ENCODE measurements at regions of chr10 and their contacts with region 1.

Region 1: DNA sequence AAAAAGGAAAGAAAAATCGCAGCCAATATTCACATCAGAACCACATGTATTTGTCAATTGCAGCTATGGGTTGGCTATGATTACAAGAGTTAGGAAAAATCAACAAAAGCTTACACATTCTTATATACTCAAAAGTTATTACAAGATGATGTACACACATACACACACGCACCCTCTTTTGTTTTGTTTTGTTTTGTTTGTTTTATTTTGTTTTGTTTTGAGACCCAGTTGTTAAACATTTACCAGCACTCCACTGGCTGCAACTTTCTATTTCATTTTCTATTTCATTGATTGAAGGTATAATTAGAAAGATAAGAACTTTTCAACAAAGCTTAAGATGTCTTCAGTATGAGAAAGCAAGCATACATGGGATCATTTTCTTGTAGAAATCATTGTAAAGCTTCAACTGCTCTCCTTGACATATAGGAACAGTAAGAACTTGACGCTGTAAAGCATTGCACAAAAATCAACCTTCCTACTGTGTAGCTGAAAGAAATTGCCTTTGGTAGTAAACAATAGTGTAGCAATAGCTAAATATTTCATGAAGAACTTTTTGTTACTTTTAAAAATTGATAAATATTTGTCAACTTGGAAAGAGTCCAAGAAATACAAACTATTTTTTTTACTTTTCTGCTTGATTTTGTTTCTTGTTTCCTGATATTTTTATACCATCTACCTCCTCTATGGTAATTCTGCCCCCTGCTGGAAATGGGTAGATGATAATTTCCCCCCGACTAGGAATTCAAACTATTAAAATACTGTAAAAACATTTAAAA is 205.9 kb downstream of the MBL2 start:
- DNase-seq: no peak
- H3K4me3 ChIP-seq: no peak overlapping the region
- CTCF ChIP-seq: peak; percentile 13

Region 2: DNA sequence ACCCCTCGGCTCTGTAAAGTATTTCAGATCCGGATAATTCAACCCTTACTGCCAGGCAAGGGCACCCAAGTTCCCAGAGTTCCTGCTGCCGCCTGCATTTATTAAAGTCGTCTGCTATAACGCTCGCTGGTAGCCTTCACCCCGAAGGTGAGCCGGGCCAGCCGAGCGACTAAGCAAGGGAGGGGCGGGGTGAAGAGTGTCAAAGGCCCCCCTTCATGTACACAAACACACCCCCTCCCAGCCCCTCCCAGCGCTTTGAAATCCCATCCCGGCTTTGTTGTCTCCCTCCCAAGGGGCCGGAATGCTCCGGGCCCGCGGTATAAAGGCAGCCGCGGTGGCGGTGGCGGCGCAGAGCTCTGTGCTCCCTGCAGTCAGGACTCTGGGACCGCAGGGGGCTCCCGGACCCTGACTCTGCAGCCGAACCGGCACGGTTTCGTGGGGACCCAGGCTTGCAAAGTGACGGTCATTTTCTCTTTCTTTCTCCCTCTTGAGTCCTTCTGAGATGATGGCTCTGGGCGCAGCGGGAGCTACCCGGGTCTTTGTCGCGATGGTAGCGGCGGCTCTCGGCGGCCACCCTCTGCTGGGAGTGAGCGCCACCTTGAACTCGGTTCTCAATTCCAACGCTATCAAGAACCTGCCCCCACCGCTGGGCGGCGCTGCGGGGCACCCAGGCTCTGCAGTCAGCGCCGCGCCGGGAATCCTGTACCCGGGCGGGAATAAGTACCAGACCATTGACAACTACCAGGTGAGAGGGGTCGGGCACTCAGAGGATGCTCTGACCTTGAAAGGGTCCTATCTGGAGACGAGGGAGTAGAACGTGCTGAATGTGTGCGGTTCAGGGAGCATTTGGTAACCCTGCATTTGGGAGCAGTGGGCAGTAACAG is 252.5 kb before region 1 on chr10 and contains the start of gene DKK1:
- CTCF ChIA-PET with region 1: interaction called, 262 read pairs
- POLR2A ChIA-PET with region 1: no interaction called
- DNase-seq: no peak
- H3K4me3 ChIP-seq: peak within 1 kb of the TSS; percentile 93
- CTCF ChIP-seq: peak; percentile 93

Region 3: DNA sequence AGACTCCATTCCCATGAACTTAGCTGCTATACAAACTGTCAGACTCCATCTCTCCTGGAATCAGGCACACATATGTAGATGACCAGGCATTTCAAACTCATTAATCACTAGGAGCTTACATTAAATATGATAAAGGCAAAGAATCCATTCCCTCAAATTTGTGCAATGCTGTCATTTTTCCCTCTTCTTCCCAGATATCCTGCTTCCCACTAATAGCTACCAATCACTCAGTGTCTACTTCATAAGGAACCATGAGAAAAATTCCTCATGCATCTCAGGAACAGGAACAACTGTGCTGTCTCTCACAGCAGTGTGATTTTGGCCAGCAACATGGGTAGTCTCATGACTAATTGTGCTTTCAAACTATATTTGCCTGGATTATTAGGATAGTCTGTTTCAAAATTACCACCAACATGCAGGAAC is 118.7 kb before region 1 on chr10:
- CTCF ChIA-PET with region 1: no interaction called
- POLR2A ChIA-PET with region 1: no interaction called
- DNase-seq: no peak
- H3K4me3 ChIP-seq: no peak overlapping the region
- CTCF ChIP-seq: no peak

Region 4: GRCh38 chr10:52747694-52748093 is 181.0 kb after region 1 on chr10:
- CTCF ChIA-PET with region 1: no interaction called
- POLR2A ChIA-PET with region 1: no interaction called
- DNase-seq: no peak
- H3K4me3 ChIP-seq: no peak overlapping the region
- CTCF ChIP-seq: no peak

Region 5: GRCh38 chr10:53153831-53154230 is 587.2 kb after region 1 on chr10:
- CTCF ChIA-PET with region 1: no interaction called
- POLR2A ChIA-PET with region 1: no interaction called
- DNase-seq: no peak
- H3K4me3 ChIP-seq: no peak overlapping the region
- CTCF ChIP-seq: no peak